ENCODE measurements at regions of chr20 and their contacts with region 1.

Region 1: DNA sequence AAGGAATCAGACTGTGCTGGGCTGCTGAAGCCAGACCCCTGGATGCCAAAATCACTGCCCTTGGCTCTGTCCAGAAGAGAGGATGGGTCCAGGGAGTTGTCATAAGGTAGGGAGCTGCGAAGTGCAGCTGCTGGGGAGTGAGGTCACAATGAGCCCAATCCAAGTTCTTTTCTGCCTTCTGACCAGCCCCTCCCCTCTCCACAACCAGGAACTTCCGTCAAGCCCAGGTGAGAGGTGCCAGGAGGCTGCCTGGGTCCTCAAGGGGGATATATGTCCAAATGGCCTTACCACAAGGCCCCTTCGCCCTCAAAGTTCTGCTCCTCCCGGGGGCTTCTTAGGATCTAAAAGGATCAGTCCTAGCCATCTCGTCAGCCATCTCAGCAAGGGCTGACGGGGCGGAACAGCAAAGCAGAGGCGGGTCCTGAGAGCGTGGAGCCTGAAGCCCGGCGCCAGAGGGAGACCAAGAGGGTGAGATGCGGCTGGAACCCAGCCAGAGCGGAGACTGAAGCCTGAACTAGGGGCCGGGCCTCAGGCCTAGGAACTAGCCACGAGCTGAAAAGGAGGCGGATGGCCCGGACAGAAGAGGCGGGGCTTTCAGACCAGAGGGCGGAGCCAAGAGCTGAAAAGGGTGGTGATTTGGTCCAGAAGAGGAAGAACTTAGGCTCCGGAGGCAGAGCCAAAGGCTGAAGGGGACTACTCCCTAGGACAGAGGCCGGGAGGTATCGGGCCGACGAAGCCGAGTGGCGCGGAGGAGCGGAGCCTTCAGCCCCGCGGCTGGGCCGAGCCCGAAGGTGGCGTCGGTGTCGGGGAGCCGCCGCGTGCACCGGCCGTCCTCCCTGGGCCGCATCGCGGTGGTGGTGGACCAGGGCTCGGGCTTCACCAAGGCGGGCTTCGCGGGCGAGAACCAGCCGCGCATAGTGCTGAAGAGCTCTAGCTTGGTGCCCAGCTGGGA is at the start of gene ACTL10:
- DNase-seq: peak; percentile 87
- H3K4me3 Mint-ChIP-seq: peak within 1 kb of the TSS; percentile 80
- H3K27ac Mint-ChIP-seq: peak within 1 kb of the TSS; percentile 94
- H3K4me1 Mint-ChIP-seq: peaks cover 31% of the 10 kb centered on the region
- H3K27me3 Mint-ChIP-seq: no peaks in the 10 kb centered on the region
- total RNA-seq, gene ACTL10: 0.96 to 1.0 TPM

Region 2: GRCh38 chr20:32972181-32973076 is 694.1 kb before region 1 on chr20:
- CTCF ChIA-PET with region 1: no interaction called
- intact Hi-C with region 1: loop called (anchors 10 kb)
- DNase-seq: peak; percentile 94
- H3K4me3 Mint-ChIP-seq: no peak overlapping the region
- H3K27ac Mint-ChIP-seq: no peak overlapping the region
- H3K4me1 Mint-ChIP-seq: peaks cover 74% of the 10 kb centered on the region
- H3K27me3 Mint-ChIP-seq: no peaks in the 10 kb centered on the region

Region 3: DNA sequence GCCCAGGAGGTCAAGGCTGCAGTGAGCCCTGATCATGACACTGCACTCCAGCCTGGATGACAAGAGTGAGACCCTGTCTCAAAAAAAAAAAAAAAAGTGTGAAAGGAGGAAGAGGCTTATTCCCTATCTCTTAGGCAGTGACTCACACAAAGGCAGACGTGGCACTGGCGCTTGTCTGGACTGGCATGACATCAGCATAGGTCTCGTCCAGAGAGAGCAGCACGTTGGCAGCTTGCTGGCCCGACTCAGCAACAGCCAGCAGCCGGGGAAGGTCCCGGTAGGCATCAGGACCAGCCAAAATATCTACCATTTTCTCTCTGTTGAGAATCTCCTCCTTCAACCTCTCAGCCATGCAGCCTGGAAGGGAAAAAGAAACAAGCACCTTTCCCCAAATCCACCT is 279.4 kb before region 1 on chr20:
- CTCF ChIA-PET with region 1: no interaction called
- intact Hi-C with region 1: no loop called
- DNase-seq: no peak
- H3K4me3 Mint-ChIP-seq: no peak overlapping the region
- H3K27ac Mint-ChIP-seq: no peak overlapping the region
- H3K4me1 Mint-ChIP-seq: no peaks in the 10 kb centered on the region
- H3K27me3 Mint-ChIP-seq: no peaks in the 10 kb centered on the region

Region 4: GRCh38 chr20:33450867-33451266 is 215.7 kb before region 1 on chr20:
- CTCF ChIA-PET with region 1: interaction called, 16 read pairs
- intact Hi-C with region 1: no loop called
- DNase-seq: no peak
- H3K4me3 Mint-ChIP-seq: no peak overlapping the region
- H3K27ac Mint-ChIP-seq: no peak overlapping the region
- H3K4me1 Mint-ChIP-seq: no peaks in the 10 kb centered on the region
- H3K27me3 Mint-ChIP-seq: no peaks in the 10 kb centered on the region

Region 5: DNA sequence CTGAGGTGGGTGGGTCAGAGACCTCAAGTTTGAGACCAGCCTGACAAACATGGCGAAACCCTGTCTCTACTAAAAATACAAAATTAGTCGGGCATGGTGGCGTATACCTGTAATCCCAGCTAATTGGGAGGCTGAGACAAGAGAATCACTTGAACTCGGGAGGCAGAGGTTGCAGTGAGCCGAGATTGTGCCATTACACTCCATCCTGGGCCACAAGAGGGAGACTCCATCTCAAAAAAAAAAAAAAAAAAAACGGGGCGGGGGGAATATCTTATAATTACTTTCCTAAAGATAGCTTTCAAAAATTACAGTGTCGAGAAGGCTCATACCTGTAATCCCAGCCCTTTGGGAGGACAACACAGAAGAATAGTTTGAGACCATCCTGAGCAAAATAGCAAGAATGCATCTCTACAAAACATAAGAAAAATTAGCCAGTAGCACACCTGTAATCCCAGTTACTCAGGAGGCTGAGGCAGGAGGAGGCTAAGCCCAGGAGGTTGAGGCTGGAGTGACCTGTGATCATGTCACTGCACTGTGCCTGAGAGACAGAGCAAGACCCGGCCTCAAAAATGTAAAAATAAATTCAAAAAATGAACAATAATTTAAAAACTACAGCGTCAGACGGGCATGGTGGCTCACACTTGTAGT is 150.9 kb before region 1 on chr20:
- CTCF ChIA-PET with region 1: interaction called, 15 read pairs
- intact Hi-C with region 1: loop called (anchors 1 kb)
- DNase-seq: peak; percentile 11
- H3K4me3 Mint-ChIP-seq: no peak overlapping the region
- H3K27ac Mint-ChIP-seq: no peak overlapping the region
- H3K4me1 Mint-ChIP-seq: peaks cover 15% of the 10 kb centered on the region
- H3K27me3 Mint-ChIP-seq: no peaks in the 10 kb centered on the region

Region 6: GRCh38 chr20:33679758-33680485 is 13.4 kb after region 1 on chr20:
- CTCF ChIA-PET with region 1: interaction called, 36 read pairs
- intact Hi-C with region 1: loop called (anchors 2 kb)
- DNase-seq: peak; percentile 62
- H3K4me3 Mint-ChIP-seq: no peak overlapping the region
- H3K27ac Mint-ChIP-seq: peak overlapping the region; percentile 54
- H3K4me1 Mint-ChIP-seq: peaks cover 58% of the 10 kb centered on the region
- H3K27me3 Mint-ChIP-seq: no peaks in the 10 kb centered on the region

Region 7: DNA sequence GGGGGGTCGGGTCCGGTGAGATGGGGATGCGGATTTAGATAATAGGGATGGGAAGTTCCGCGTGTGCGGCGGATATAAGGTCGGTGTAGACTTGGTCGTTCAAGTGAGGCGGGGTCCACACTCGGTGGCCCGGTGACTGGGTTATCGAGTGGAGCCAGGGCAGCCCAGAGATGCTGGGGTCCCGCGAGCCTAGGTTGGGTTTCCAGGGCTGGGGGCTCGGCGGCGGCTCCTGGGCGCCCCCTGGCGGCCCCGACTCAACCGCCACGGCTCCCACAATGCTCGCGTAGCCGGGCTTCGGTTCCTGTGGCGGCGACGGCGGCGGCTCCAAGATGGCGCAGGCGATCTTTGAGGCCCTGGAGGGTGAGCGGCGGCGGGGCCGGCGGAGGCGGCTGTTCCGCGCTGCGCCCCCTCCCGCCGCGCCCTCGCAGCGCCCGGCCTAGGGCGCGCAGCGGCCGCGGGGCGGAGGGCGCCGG is 65.2 kb after region 1 on chr20 and contains the start of gene ZNF341:
- CTCF ChIA-PET with region 1: interaction called, 14 read pairs
- intact Hi-C with region 1: loop called (anchors 1 kb)
- DNase-seq: peak; percentile 89
- H3K4me3 Mint-ChIP-seq: peak within 1 kb of the TSS; percentile 79
- H3K27ac Mint-ChIP-seq: peak within 1 kb of the TSS; percentile 90
- H3K4me1 Mint-ChIP-seq: peaks cover 18% of the 10 kb centered on the region
- H3K27me3 Mint-ChIP-seq: no peaks in the 10 kb centered on the region
- total RNA-seq, gene ZNF341: 5.8 to 6.8 TPM

Region 8: GRCh38 chr20:33837998-33838864 is 171.7 kb after region 1 on chr20:
- CTCF ChIA-PET with region 1: no interaction called
- intact Hi-C with region 1: no loop called
- DNase-seq: no peak
- H3K4me3 Mint-ChIP-seq: no peak overlapping the region
- H3K27ac Mint-ChIP-seq: no peak overlapping the region
- H3K4me1 Mint-ChIP-seq: peaks cover 78% of the 10 kb centered on the region
- H3K27me3 Mint-ChIP-seq: no peaks in the 10 kb centered on the region

Measured in activated naive CD4-positive, alpha-beta T cell treated with anti-CD3 and anti-CD28 coated beads for 36 hours (primary cell).